AG04450 (cell line): ENCODE measurements at regions of chr1 and their contacts with region 1.

Region 1: DNA sequence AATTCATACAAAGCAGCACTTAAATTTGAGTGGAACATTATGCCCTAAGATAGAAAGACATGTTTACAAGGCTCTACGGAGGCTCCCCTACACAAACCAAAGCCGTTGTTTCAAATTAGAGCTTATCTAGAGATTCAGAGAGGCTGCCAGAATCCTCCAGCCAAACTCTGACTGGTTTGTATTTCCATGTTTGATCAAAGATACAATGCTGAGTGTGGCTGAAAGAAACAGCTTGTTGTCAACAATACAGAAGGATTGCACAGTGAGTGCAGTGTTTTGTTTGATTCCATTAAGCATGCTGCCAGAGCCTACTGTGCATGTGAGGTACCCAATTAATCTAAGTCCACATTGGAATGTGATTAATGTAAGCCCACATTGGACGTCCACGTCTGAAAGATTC is 402.7 kb downstream of the DISC1 start:
- DNase-seq: no peak
- H3K4me3 ChIP-seq: no peak overlapping the region
- H3K27ac ChIP-seq: no peak overlapping the region
- H3K27me3 ChIP-seq: no peaks in the 10 kb centered on the region
- CTCF ChIP-seq: no peak

Region 2: GRCh38 chr1:232428786-232429530 is 399.6 kb after region 1 on chr1:
- CTCF ChIA-PET with region 1: interaction called, 11 read pairs
- POLR2A ChIA-PET with region 1: no interaction called
- DNase-seq: peak; percentile 65
- H3K4me3 ChIP-seq: no peak overlapping the region
- H3K27ac ChIP-seq: no peak overlapping the region
- H3K27me3 ChIP-seq: no peaks in the 10 kb centered on the region
- CTCF ChIP-seq: no peak